ENCODE measurements at regions of chr11 and their contacts with region 1.

Region 1: GRCh38 chr11:126268708-126269579 is at the starts of genes FOXRED1 and SRPRA:
- DNase-seq: peak; percentile 99
- ATAC-seq: peak; percentile 99
- H3K4me3 Mint-ChIP-seq: peak within 1 kb of the TSS; percentile 98
- H3K27ac Mint-ChIP-seq: peak within 1 kb of the TSS; percentile 97
- H3K4me1 Mint-ChIP-seq: peaks cover 35% of the 10 kb centered on the region
- H3K27me3 Mint-ChIP-seq: no peaks in the 10 kb centered on the region
- total RNA-seq, gene FOXRED1: 37.4 to 38.5 TPM
- total RNA-seq, gene SRPRA: 110 TPM

Region 2: DNA sequence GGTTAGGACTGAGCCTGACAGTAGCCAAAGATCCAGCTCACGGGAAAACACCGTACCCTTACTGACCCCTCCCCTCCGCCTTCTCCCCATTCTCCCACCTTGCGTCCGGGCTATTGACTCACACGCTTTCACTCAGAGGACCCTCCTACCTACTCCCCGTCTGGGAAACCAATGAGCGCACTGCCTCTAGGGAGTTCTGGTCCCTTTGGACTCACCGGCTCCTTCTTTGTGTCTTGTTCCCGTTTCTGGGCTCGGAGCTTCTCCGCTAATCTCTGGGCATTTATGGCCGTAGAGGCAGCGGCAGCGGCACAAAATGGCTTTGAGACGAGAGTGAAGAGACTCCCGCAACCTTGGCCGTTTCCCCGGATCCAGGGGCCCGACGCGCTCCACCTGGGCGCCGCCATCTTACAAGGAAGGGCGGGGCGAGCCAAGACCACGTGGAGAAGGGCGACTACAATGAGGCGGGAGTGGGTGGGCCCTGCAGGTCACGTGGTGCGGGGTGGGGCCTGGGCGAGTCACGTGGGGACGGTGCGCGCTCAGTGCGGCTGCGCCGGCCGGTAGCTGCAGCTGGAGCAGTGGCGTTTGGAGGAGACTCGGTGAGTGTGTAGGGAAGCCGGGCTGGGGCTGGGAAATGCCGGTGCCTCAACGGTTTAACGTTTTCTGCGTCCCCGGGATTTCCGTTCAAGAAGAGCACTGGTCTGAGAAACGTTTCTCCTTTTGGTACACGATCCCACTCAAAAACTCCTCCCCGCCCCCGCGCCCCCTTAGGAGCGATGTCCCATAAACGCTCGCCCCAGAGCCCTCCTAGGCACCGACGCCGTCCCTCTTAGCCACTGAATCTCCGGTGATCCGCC is 57.5 kb before region 1 on chr11 and contains the starts of genes FAM118B and RPUSD4:
- POLR2A ChIA-PET with region 1: interaction called, 13 read pairs
- DNase-seq: peak; percentile 99
- ATAC-seq: peak; percentile 97
- H3K4me3 Mint-ChIP-seq: peak within 1 kb of the TSS; percentile 99
- H3K27ac Mint-ChIP-seq: peak within 1 kb of the TSS; percentile 95
- H3K4me1 Mint-ChIP-seq: peaks cover 28% of the 10 kb centered on the region
- H3K27me3 Mint-ChIP-seq: no peaks in the 10 kb centered on the region
- total RNA-seq, gene FAM118B: 10.1 to 12.2 TPM
- total RNA-seq, gene RPUSD4: 31.6 to 33.8 TPM

Region 3: GRCh38 chr11:126282736-126283591 is 14.0 kb after region 1 on chr11 and contains the start of gene TIRAP:
- POLR2A ChIA-PET with region 1: interaction called, 52 read pairs
- DNase-seq: peak; percentile 80
- ATAC-seq: peak; percentile 78
- H3K4me3 Mint-ChIP-seq: peak within 1 kb of the TSS; percentile 98
- H3K27ac Mint-ChIP-seq: peak within 1 kb of the TSS; percentile 98
- H3K4me1 Mint-ChIP-seq: peaks cover 34% of the 10 kb centered on the region
- H3K27me3 Mint-ChIP-seq: no peaks in the 10 kb centered on the region
- total RNA-seq, gene TIRAP: 15.6 to 18.8 TPM

Region 4: GRCh38 chr11:126303623-126304456 is 34.9 kb after region 1 on chr11 and contains the start of gene DCPS:
- POLR2A ChIA-PET with region 1: interaction called, 14 read pairs
- DNase-seq: peak; percentile 93
- ATAC-seq: peak; percentile 99
- H3K4me3 Mint-ChIP-seq: peak within 1 kb of the TSS; percentile 88
- H3K27ac Mint-ChIP-seq: peak within 1 kb of the TSS; percentile 96
- H3K4me1 Mint-ChIP-seq: peaks cover 22% of the 10 kb centered on the region
- H3K27me3 Mint-ChIP-seq: no peaks in the 10 kb centered on the region
- total RNA-seq, gene DCPS: 27.4 to 29.1 TPM

Measured in activated naive CD8-positive, alpha-beta T cell treated with anti-CD3 and anti-CD28 coated beads, Interleukin-2, amount 10 ng/mL, durations not matched to agents 7 days and 5 days (primary cell).